Activated CD4-positive, alpha-beta T cell treated with anti-CD3 and anti-CD28 coated beads for 36 hours (primary cell): ENCODE measurements at regions of chr19 and their contacts with region 1.

Region 1: GRCh38 chr19:3809881-3810707 is 23.9 kb upstream of the MATK start:
- DNase-seq: no peak
- ATAC-seq: no peak
- H3K4me3 Mint-ChIP-seq: no peak overlapping the region
- H3K27ac Mint-ChIP-seq: no peak overlapping the region
- H3K4me1 Mint-ChIP-seq: peaks cover 38% of the 10 kb centered on the region
- H3K27me3 Mint-ChIP-seq: no peaks in the 10 kb centered on the region

Region 2: DNA sequence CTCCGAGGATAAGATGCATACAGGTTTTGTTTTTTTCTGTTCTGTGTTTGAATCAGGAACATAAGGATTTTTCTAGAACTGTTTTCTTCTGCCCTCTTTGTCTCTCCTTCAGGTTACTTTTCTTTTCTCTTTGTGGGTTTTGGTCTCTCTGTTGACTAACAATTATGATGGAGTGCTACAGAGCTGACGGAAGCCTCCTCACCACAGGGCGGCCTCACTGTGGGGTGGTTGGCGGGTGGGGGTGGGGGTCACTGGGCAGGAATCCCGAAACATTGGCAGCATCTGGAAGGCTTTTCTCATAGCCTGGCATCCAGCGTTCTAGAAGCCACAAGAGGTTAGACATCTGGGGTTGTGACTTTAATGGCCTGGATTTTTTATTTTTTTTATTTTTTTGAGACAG is 12.0 kb before region 1 on chr19:
- CTCF ChIA-PET with region 1: interaction called, 4 read pairs
- POLR2A ChIA-PET with region 1: no interaction called
- intact Hi-C with region 1: loop called in 1 of 2 experiments (anchors 2 kb)
- DNase-seq: peak; percentile 50
- ATAC-seq: peak; percentile 65
- H3K4me3 Mint-ChIP-seq: no peak overlapping the region
- H3K27ac Mint-ChIP-seq: peak overlapping the region; percentile 58
- H3K4me1 Mint-ChIP-seq: peaks cover 22% of the 10 kb centered on the region
- H3K27me3 Mint-ChIP-seq: no peaks in the 10 kb centered on the region

Region 3: GRCh38 chr19:4232958-4233853 is 423.1 kb after region 1 on chr19:
- CTCF ChIA-PET with region 1: no interaction called
- POLR2A ChIA-PET with region 1: no interaction called
- intact Hi-C with region 1: no loop called
- DNase-seq: peak; percentile 90
- ATAC-seq: peak; percentile 23
- H3K4me3 Mint-ChIP-seq: no peak overlapping the region
- H3K27ac Mint-ChIP-seq: no peak overlapping the region
- H3K4me1 Mint-ChIP-seq: peaks cover 9% of the 10 kb centered on the region
- H3K27me3 Mint-ChIP-seq: peaks cover 4% of the 10 kb centered on the region